Activated B cell treated with CpG ODN at 0.5 μM for 24 hours (primary cell): ENCODE measurements at regions of chr2 and their contacts with region 1.

Region 1: GRCh38 chr2:30336978-30337841 is 105.9 kb downstream of the LBH start:
- DNase-seq: peak; percentile 49
- ATAC-seq: peak; percentile 85
- H3K4me3 Mint-ChIP-seq: peak overlapping the region; percentile 76
- H3K27ac Mint-ChIP-seq: peak overlapping the region; percentile 98
- H3K4me1 Mint-ChIP-seq: peaks cover 95% of the 10 kb centered on the region
- H3K27me3 Mint-ChIP-seq: no peaks in the 10 kb centered on the region
- CTCF ChIP-seq: no peak

Region 2: GRCh38 chr2:29187926-29188325 is 1149.3 kb before region 1 on chr2:
- CTCF ChIA-PET with region 1: no interaction called
- POLR2A ChIA-PET with region 1: no interaction called
- intact Hi-C with region 1: no loop called
- DNase-seq: no peak
- ATAC-seq: no peak
- H3K4me3 Mint-ChIP-seq: no peak overlapping the region
- H3K27ac Mint-ChIP-seq: no peak overlapping the region
- H3K4me1 Mint-ChIP-seq: peaks cover 8% of the 10 kb centered on the region
- H3K27me3 Mint-ChIP-seq: no peaks in the 10 kb centered on the region
- CTCF ChIP-seq: no peak

Region 3: GRCh38 chr2:30165050-30165520 is 172.1 kb before region 1 on chr2:
- CTCF ChIA-PET with region 1: interaction called, 21 read pairs
- POLR2A ChIA-PET with region 1: no interaction called
- intact Hi-C with region 1: loop called (anchors 2 kb)
- DNase-seq: no peak
- ATAC-seq: peak; percentile 100
- H3K4me3 Mint-ChIP-seq: no peak overlapping the region
- H3K27ac Mint-ChIP-seq: no peak overlapping the region
- H3K4me1 Mint-ChIP-seq: peaks cover 21% of the 10 kb centered on the region
- H3K27me3 Mint-ChIP-seq: no peaks in the 10 kb centered on the region
- CTCF ChIP-seq: peak; percentile 45

Region 4: GRCh38 chr2:30239308-30239985 is 97.8 kb before region 1 on chr2:
- CTCF ChIA-PET with region 1: interaction called, 51 read pairs
- POLR2A ChIA-PET with region 1: interaction called, 147 read pairs
- intact Hi-C with region 1: no loop called
- DNase-seq: peak; percentile 60
- ATAC-seq: peak; percentile 71
- H3K4me3 Mint-ChIP-seq: peak overlapping the region; percentile 21
- H3K27ac Mint-ChIP-seq: peak overlapping the region; percentile 94
- H3K4me1 Mint-ChIP-seq: peaks cover 92% of the 10 kb centered on the region
- H3K27me3 Mint-ChIP-seq: no peaks in the 10 kb centered on the region
- CTCF ChIP-seq: peak; percentile 44

Region 5: GRCh38 chr2:30287857-30288513 is 49.2 kb before region 1 on chr2:
- CTCF ChIA-PET with region 1: interaction called, 15 read pairs
- POLR2A ChIA-PET with region 1: interaction called, 46 read pairs
- intact Hi-C with region 1: loop called (anchors 1 kb)
- DNase-seq: peak; percentile 53
- ATAC-seq: peak; percentile 83
- H3K4me3 Mint-ChIP-seq: peak overlapping the region; percentile 83
- H3K27ac Mint-ChIP-seq: peak overlapping the region; percentile 92
- H3K4me1 Mint-ChIP-seq: peaks cover 92% of the 10 kb centered on the region
- H3K27me3 Mint-ChIP-seq: no peaks in the 10 kb centered on the region
- CTCF ChIP-seq: no peak

Region 6: DNA sequence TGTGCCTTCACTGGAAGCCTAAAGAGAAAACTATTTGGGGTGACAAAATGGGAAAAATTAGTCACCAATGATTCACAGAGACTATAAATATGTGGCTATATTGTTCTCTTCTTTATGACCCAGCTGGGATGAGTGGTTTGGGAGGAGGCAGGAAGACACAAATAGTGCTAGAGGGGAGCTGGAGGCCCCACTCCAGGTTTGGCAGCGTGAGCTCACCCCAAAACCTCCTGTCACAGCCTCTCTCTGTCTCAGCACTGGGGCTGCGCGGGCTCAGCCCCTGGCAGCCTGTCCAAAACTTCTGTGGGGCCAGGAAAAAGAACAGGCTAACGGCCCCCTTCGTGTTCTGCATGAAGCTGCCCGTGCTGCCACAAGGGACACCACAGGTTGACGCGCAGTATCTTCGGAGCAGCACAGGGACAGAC is 36.7 kb after region 1 on chr2:
- CTCF ChIA-PET with region 1: interaction called, 9 read pairs
- POLR2A ChIA-PET with region 1: no interaction called
- intact Hi-C with region 1: loop called (anchors 2 kb)
- DNase-seq: no peak
- ATAC-seq: no peak
- H3K4me3 Mint-ChIP-seq: no peak overlapping the region
- H3K27ac Mint-ChIP-seq: no peak overlapping the region
- H3K4me1 Mint-ChIP-seq: peaks cover 26% of the 10 kb centered on the region
- H3K27me3 Mint-ChIP-seq: no peaks in the 10 kb centered on the region
- CTCF ChIP-seq: no peak

Region 7: GRCh38 chr2:30447149-30448045 is 110.2 kb after region 1 on chr2 and contains the start of gene LCLAT1:
- CTCF ChIA-PET with region 1: interaction called, 3 read pairs
- POLR2A ChIA-PET with region 1: interaction called, 12 read pairs
- intact Hi-C with region 1: loop called (anchors 2 kb)
- DNase-seq: peak; percentile 80
- ATAC-seq: peak; percentile 94
- H3K4me3 Mint-ChIP-seq: peak within 1 kb of the TSS; percentile 96
- H3K27ac Mint-ChIP-seq: peak within 1 kb of the TSS; percentile 95
- H3K4me1 Mint-ChIP-seq: peaks cover 25% of the 10 kb centered on the region
- H3K27me3 Mint-ChIP-seq: no peaks in the 10 kb centered on the region
- CTCF ChIP-seq: no peak
- total RNA-seq, gene LCLAT1: 20.1 and 25.9 TPM in 2 replicates